Activated naive CD8-positive, alpha-beta T cell treated with anti-CD3 and anti-CD28 coated beads, Interleukin-2, amount 10 ng/mL, durations not matched to agents 7 days and 5 days (primary cell): ENCODE measurements at regions of chr16 and their contacts with region 1.

Region 1: DNA sequence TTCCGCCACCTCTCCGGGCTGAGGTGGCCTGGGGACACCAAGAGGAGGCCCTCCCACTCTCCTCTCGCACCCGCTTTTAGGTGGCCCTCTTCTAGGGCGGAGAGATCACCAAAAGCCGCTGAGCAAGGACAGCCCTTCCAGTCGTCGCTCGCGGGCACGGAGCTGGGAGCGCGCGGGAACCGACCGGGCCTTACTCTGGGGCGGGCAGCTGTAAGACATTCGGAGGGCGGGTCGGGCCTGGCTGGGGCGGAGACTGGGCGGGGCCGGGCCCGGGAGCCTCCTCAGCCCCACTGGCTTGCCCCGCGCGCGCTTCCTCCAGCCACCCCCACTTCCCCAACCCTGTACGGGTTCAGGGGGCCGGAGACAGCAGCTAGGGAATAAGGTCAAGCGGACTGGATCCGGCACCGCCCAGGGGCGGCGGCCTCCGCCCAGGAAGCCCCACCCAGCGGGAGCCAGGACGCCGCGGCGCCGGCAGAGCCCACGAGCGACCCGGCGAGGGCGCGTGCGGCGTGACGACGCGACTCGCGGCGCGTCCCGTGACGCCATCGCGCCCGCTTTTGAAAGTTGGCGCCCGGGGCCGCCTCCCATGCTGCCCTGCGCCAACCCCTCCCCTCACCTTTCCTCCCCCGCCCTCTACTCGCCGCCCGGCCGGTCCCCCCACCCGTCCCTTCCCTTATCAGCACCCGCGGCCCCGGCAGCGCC is 351 bp upstream of the CTCF start:
- DNase-seq: peak; percentile 99
- ATAC-seq: peak; percentile 90
- H3K4me3 Mint-ChIP-seq: peak overlapping the region; percentile 89
- H3K27ac Mint-ChIP-seq: peak overlapping the region; percentile 92
- H3K4me1 Mint-ChIP-seq: peaks cover 28% of the 10 kb centered on the region
- H3K27me3 Mint-ChIP-seq: no peaks in the 10 kb centered on the region

Region 2: DNA sequence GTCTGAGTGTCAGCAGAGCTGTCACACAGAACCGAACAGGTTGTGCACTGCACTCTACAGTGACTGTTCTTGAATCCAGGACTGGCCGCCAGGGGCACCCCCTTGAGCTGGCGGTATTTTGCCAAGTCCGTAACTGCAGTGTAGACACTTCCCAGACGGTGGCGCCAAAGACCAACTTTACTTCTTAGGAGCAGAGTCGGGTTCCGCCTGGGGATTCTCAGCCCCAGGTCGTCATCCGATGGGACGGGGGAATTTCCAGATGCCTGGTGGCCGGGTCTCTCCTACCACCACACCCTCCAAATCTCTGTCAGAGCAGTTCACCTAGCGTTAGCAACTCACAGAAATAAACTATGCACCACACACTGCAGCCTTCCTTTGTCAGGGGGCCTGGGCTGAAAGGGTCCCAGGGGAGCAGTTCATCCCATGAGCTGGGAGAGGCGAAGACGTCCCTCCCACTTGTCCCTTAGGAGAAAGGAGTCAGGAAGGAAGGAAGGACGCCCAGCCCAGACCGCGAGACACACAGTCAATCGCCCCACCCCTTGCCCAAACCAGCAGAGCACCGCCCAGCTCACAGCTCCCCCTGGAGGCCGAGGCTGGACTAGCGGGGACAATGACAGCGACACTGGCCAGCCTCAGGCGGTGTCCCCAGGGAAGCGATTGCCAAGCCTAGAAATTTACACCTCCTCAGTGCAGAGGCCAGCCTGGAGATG is 40.7 kb before region 1 on chr16:
- POLR2A ChIA-PET with region 1: interaction called, 15 read pairs
- DNase-seq: peak; percentile 96
- ATAC-seq: peak; percentile 84
- H3K4me3 Mint-ChIP-seq: peak overlapping the region; percentile 85
- H3K27ac Mint-ChIP-seq: peak overlapping the region; percentile 91
- H3K4me1 Mint-ChIP-seq: peaks cover 37% of the 10 kb centered on the region
- H3K27me3 Mint-ChIP-seq: no peaks in the 10 kb centered on the region

Region 3: DNA sequence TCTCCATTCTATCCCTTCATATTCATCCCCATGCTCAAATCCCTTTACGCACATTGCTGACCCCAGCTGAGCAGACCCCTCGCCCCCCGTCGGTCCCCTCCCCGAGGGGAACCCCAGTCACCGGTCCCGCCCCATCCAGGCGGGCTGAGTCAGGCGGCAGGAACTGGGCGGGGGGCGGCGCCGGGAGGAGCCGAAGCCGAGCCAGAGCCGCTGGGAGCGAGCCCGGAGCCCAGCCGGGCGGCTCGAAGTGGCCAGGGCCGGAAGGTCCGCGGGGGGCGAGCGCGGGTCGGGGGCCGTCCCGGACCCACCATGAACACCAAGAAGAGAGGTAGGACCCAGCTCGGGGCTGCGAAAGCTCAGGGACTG is 24.7 kb before region 1 on chr16:
- POLR2A ChIA-PET with region 1: interaction called, 16 read pairs
- DNase-seq: peak; percentile 72
- ATAC-seq: peak; percentile 38
- H3K4me3 Mint-ChIP-seq: peak overlapping the region; percentile 86
- H3K27ac Mint-ChIP-seq: peak overlapping the region; percentile 73
- H3K4me1 Mint-ChIP-seq: peaks cover 16% of the 10 kb centered on the region
- H3K27me3 Mint-ChIP-seq: peaks cover 28% of the 10 kb centered on the region

Region 4: GRCh38 chr16:67613808-67614207 is 51.8 kb after region 1 on chr16:
- POLR2A ChIA-PET with region 1: no interaction called
- DNase-seq: no peak
- ATAC-seq: no peak
- H3K4me3 Mint-ChIP-seq: no peak overlapping the region
- H3K27ac Mint-ChIP-seq: no peak overlapping the region
- H3K4me1 Mint-ChIP-seq: no peaks in the 10 kb centered on the region
- H3K27me3 Mint-ChIP-seq: no peaks in the 10 kb centered on the region

Region 5: GRCh38 chr16:67660564-67661028 is 98.6 kb after region 1 on chr16 and contains the start of gene PARD6A:
- POLR2A ChIA-PET with region 1: interaction called, 38 read pairs
- DNase-seq: peak; percentile 93
- ATAC-seq: peak; percentile 85
- H3K4me3 Mint-ChIP-seq: peak within 1 kb of the TSS; percentile 95
- H3K27ac Mint-ChIP-seq: peak within 1 kb of the TSS; percentile 95
- H3K4me1 Mint-ChIP-seq: peaks cover 14% of the 10 kb centered on the region
- H3K27me3 Mint-ChIP-seq: no peaks in the 10 kb centered on the region
- total RNA-seq, gene PARD6A: 9.5 to 11.1 TPM

Region 6: DNA sequence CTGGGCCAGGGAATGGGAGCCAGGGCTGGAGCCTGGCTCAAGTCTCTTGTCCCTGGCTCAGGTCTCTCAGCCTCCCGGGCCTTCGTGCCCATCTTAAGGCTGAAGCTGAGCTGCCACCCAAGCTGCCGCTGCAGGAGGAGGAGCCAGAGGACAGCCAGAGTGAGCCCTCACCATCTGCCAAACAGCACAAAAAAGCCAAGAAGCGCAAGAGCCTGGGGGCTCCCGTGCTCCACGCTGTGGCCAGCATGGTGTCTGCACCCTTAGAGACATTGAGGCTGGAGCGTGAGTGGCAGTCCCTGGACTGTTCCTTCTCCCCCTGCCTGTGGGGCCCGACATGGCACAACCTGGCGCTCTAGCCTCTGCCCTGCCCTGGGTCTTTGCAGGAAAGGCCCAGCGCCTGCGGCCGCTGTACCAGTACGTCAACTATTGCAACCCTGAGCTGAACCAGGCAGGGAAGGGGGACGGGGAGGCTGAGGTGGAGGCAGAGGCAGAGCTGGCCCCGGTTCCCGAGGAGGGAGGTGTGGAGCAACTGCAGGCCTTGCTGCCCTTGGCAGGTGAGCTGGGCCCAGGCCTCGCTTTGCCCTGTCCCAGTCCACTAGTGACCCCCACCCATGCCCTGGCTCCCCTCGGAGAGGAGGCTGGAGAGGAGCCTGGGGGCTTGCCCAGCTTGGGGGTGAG is 106.0 kb after region 1 on chr16:
- POLR2A ChIA-PET with region 1: interaction called, 20 read pairs
- DNase-seq: peak; percentile 81
- ATAC-seq: peak; percentile 91
- H3K4me3 Mint-ChIP-seq: peak overlapping the region; percentile 93
- H3K27ac Mint-ChIP-seq: no peak overlapping the region
- H3K4me1 Mint-ChIP-seq: peaks cover 9% of the 10 kb centered on the region
- H3K27me3 Mint-ChIP-seq: no peaks in the 10 kb centered on the region